ENCODE measurements at regions of chr16 and their contacts with region 1.

Region 1: DNA sequence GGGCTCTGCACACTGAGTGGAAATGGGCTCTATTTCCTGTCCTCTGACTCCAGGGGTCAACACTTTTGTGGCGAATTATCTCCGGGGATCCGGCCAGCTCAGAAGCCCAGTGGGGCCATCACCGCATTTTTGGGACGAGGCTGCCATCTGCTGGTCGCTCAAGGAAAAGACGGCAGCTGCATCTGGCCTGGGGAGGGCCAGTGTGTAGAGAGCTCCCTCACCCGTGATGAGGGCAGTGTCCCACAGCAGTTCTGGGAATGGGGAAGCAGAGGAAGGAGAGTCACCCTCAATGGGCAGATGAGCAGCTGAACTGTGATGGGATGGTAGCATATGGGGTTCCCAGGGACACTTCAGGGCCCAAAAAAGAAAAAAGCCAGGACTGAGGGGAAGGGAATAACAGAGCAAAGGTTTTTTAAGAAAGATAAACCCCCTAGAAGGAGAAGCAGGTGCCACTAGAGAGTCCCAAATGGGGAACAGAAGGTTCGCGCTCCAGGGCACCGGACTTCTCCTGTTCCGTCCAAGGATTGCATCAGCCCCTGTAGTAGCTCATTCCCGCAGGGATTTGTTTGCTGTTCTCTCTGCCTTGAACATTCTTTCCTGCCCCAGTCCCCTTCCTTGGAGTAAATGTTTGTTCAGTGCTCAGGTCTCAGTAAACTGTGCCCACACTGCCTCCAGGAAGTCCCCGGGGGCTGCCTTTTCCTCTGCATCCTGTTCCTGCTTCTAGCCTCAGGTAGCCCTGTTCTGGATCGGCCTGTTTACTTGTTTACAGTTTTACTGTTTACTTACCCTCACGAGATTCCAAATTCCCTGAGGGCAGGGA is 9.3 kb upstream of the ABCC12 start:
- DNase-seq: peak; percentile 82
- ATAC-seq: peak; percentile 89
- H3K4me3 ChIP-seq: peak overlapping the region; percentile 48 to 68 (median 53)
- H3K27ac ChIP-seq: peak overlapping the region; percentile 48
- H3K4me1 ChIP-seq: peaks cover 36% of the 10 kb centered on the region
- H3K27me3 ChIP-seq: 0 out of 5 replicates have a peak, but pooled peaks cover 0 to 4% of the 10 kb centered on the region in 2 experiments
- CTCF ChIP-seq: peak; percentile 99
- EP300 ChIP-seq: peak; percentile 26 to 68; a peak in 2 of 4 replicates
- POLR2A ChIP-seq: peak in 1 of 2 experiments; percentile 23; a peak in 1 of 4 replicates
- RAD21 ChIP-seq: peak; percentile 96

Region 2: DNA sequence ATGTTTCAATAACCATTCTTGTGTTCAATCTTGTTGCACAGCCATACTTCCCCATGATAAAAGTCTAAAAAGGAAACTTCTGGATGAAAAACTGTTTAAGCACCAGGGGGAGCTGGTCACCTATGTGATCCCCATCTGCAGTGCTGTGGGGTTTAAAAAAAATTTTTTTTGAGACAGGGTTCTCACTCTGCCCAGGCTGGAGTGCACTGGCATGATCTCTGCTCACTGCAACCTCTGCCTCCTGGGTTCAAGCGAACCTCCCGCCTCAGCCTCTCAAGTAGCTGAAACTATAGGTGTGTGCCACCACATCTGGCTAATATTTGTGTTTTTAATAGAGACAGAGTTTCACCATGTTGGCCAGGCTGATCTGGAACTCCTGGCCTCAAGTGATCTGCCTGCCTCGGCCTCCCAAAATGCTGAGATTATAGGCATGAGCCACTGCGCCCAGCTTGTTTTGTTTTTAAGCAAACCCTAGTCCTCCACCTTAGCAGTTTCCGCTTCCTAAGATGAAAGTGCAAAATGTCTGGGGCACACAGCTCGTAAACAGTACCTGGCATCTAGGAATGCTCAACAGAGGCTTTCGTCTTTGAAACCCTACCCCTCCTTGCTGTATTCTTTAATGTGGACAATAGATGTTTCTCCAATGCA is 1217.1 kb before region 1 on chr16:
- CTCF ChIA-PET with region 1: interaction called, 9 read pairs
- POLR2A ChIA-PET with region 1: interaction called, 8 read pairs
- in situ Hi-C with region 1: loop called (anchors 10 kb)
- intact Hi-C with region 1: loop called (anchors 1 kb)
- DNase-seq: peak; percentile 71
- ATAC-seq: peak; percentile 80
- H3K4me3 ChIP-seq: peak overlapping the region; percentile 1 to 47 (median 15); a peak in 5 of 6 replicates
- H3K27ac ChIP-seq: peak overlapping the region; percentile 56
- H3K4me1 ChIP-seq: peaks cover 42% of the 10 kb centered on the region
- H3K27me3 ChIP-seq: no peaks in the 10 kb centered on the region
- CTCF ChIP-seq: peak; percentile 85
- EP300 ChIP-seq: no peak
- POLR2A ChIP-seq: no peak
- RAD21 ChIP-seq: peak; percentile 91

Region 3: GRCh38 chr16:47258874-47259461 is 906.1 kb before region 1 on chr16:
- CTCF ChIA-PET with region 1: interaction called, 11 read pairs
- POLR2A ChIA-PET with region 1: no interaction called
- in situ Hi-C with region 1: no loop called
- intact Hi-C with region 1: loop called (anchors 2 kb)
- DNase-seq: peak; percentile 38
- ATAC-seq: peak; percentile 80
- H3K4me3 ChIP-seq: no peak overlapping the region
- H3K27ac ChIP-seq: no peak overlapping the region
- H3K4me1 ChIP-seq: no peaks in the 10 kb centered on the region
- H3K27me3 ChIP-seq: no peaks in the 10 kb centered on the region
- CTCF ChIP-seq: peak; percentile 58
- EP300 ChIP-seq: no peak
- POLR2A ChIP-seq: no peak
- RAD21 ChIP-seq: peak; percentile 34; the same call in 1 of the 2 replicates

Region 4: GRCh38 chr16:48176635-48177408 is 11.7 kb after region 1 on chr16:
- CTCF ChIA-PET with region 1: no interaction called
- POLR2A ChIA-PET with region 1: interaction called, 11 read pairs
- in situ Hi-C with region 1: no loop called
- intact Hi-C with region 1: no loop called
- DNase-seq: peak; percentile 47
- ATAC-seq: peak; percentile 58
- H3K4me3 ChIP-seq: no peak overlapping the region
- H3K27ac ChIP-seq: no peak overlapping the region
- H3K4me1 ChIP-seq: peaks cover 55% of the 10 kb centered on the region
- H3K27me3 ChIP-seq: no peaks in the 10 kb centered on the region
- CTCF ChIP-seq: no peak
- EP300 ChIP-seq: no peak; a peak in 1 of 4 replicates
- POLR2A ChIP-seq: no peak
- RAD21 ChIP-seq: no peak

Region 5: GRCh38 chr16:48231727-48232492 is 66.8 kb after region 1 on chr16:
- CTCF ChIA-PET with region 1: interaction called, 3 read pairs
- POLR2A ChIA-PET with region 1: interaction called, 26 read pairs
- in situ Hi-C with region 1: no loop called
- intact Hi-C with region 1: loop called (anchors 2 kb)
- DNase-seq: peak; percentile 49
- ATAC-seq: peak; percentile 60
- H3K4me3 ChIP-seq: no peak overlapping the region
- H3K27ac ChIP-seq: no peak overlapping the region
- H3K4me1 ChIP-seq: peaks cover 65% of the 10 kb centered on the region
- H3K27me3 ChIP-seq: no peaks in the 10 kb centered on the region
- CTCF ChIP-seq: peak; percentile 76
- EP300 ChIP-seq: no peak
- POLR2A ChIP-seq: no peak
- RAD21 ChIP-seq: peak; percentile 76